Left ventricle myocardium superior (tissue), 1 donor: ENCODE measurements at regions of chr9 and their contacts with region 1.

Region 1: DNA sequence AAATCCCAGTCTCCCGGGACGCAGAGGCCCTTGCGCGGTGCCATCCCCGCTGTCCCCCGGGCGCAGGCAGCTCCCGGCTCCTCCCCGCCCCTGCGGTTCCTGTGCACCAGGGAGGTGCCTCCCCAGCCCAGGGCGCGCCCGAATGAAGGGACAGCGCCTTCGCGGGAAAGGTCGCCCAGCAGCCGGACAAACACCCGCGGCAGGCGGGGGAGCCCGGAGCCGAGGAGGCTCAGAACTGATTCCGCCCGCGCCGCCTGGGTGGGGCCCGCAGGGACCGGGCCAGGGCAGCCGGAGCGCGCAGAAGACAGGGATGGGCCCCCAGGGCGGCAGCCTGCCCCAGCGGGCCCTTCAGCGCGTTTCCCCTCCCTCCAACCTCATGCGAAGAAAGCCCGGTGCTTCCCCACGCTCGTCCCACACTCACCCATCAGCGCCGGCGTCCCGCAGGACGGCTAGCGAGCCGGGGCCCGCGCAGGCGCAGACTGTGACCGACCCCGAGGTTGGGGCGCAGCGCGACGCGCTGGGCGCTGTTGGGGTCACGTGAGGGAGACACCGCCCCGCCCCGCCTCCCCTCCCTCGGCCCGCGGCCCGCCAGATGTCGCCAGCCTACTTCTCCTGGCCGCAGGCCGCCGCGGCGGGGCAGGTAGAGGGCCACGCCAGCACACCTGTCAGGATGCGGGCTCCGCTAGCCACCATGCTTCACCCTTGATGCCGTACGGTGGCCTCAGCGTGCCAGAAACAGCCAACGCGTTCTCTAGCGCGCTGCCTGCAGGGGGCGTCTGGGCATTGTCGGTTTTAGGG is at the start of gene SLC25A51:
- DNase-seq: peak; percentile 96
- ATAC-seq: peak; percentile 96
- total RNA-seq, gene SLC25A51: 23.0 TPM

Region 2: GRCh38 chr9:37852222-37852621 is 51.6 kb before region 1 on chr9:
- intact Hi-C with region 1: no loop called
- DNase-seq: no peak
- ATAC-seq: no peak

Region 3: GRCh38 chr9:38088006-38088925 is 184.4 kb after region 1 on chr9:
- intact Hi-C with region 1: loop called (anchors 10 kb)
- DNase-seq: peak; percentile 82
- ATAC-seq: peak; percentile 81